Posterior vena cava (tissue), 2 donors: ENCODE measurements at regions of chr17 and their contacts with region 1.

Region 1: GRCh38 chr17:59004338-59005111 is 102.2 kb downstream of the TRIM37 start:
- DNase-seq: no peak

Region 2: DNA sequence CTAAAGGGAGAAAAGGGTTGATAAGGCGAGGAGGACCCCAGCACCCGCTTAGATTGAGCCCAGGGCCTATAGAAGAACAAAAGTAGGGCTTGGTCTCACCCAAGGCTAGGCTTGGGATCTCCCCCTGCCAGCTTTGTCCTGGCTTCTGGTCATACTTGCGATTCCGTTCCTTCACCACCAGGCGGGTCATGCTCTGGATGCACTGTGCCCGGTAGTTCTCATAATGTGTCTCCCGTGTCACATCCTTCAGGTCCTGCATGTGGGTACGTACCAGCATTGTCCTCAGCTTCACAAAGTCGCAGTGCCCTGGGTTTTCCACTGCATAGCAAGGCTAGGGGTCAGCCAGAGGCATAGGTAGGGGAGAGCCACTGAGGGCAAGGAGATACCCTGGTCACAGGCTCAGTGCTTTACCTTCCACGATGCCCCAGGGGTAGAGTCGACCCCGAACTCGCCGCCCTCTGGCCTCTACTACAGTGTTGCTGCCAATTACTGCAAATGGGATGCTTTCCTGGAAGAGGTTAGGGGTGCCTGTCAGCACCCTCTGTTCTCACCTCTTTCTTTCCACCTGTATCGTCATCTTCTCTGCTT is 483.6 kb before region 1 on chr17:
- intact Hi-C with region 1: loop called in 1 of 2 experiments (anchors 5 kb)
- DNase-seq: peak; percentile 77

Region 3: GRCh38 chr17:58587702-58588254 is 416.7 kb before region 1 on chr17:
- intact Hi-C with region 1: loop called in 1 of 2 experiments (anchors 2 kb)
- DNase-seq: no peak

Region 4: DNA sequence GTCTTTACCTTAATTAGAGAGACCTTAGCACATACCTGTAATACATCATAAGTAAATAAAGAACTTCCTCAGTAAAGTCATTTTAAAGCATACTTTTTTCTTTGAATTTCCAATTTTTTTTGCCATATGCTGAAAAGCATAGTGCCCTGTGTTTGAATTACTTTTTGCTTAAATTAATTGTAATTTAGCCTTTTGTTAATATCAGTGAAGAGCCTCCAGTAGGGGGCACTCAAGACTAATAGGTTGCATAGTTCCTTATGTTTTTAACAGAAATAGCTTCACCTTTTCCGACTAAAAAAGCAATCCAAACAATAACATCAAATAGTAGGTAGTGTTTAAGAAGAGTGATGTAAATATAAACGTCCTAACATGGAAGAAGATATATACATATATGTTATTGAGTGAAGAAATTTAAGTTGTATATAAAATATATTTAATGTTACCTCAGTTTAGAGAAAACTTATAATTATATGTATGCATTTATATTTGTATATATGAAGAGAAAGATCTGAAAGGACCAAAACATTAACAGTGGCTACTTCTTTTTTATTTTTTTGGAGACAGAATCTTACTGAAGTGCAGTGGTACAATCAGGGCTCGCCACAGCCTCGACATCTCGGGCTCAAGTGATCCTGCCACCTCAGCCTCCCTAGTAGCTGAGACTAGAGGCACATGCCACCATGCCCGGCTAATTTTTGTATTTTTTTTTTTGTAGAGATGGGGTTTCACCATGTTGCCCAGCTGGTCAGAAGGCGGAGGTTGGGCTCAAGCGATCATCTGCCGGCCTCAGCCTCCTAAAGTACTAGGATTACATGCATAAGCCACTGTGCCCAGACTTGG is 293.4 kb before region 1 on chr17:
- intact Hi-C with region 1: loop called in 1 of 2 experiments (anchors 5 kb)
- DNase-seq: no peak

Region 5: DNA sequence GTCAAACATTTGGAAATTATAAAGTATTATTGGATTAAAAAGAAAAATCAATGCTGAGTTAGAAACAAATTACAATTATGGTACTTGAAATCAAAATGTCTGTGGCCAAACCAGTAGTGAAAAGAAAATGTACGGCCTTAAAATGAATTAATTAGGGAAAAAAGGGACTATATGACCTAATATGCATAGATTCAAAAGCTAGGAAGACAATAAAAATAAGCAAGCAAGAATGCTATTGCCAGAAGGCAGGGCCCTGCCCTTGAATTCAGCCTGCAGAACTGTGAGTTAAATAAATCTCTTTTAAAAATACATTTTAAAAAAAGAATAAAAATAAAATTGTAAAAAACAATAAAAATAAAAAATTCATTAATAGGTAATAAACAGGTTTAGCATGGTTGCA is 13.5 kb after region 1 on chr17:
- intact Hi-C with region 1: no loop called
- DNase-seq: no peak

Region 6: DNA sequence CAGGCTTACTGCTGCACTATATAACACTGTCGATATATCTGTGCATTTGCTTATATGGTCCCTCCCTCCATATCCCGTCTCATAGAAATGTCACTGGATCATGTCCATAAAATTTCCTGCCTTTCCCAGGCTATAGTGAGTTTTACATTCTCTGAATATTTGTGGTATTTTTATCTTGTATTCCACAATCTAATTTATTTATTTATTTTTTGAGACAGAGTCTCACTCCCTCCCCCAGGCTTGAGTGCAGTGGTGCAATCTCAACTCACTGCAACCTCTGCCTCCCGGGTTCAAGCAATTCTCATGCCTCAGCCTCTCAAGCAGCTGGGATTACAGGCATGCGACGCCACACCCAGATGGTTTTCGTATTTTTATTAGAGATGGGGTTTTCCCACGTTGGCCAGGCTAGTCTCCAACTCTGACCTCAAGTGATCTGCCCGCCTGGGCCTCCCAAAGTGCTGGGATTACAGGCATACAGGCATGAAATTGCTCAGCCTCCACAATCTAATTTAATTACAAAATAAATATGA is 89.2 kb after region 1 on chr17:
- intact Hi-C with region 1: no loop called
- DNase-seq: peak; percentile 84